Caco-2 (cell line): ENCODE measurements at regions of chr5 and their contacts with region 1.

Region 1: DNA sequence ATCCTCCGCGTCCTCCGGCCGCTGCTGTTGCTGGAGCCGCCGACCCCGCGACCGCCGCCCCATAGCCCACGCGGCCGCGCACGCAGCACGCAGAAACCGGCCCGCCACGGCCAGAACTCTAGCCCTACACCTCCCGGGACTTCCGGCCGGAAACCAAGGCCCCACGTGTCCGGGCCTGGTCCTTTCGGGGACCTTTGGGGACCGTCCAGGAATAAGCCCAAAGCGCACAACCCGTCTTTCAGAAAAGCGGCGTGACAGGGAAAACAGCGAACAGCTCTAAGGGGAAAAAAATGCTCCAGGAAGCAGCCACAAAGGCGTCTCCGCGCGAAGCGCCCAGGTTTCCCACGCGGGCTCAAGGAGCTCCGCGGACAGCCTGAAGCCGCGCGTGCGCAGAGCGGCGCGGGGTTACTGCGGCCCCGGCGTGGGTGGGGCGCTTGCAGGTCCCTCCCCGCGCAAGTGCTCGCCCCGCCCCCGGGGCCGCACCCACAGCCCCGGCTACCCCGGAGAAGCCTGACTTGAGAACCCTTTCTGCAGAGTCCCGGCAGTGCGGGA is at the starts of genes NSUN2 and SRD5A1:
- DNase-seq: peak; percentile 89 to 91
- H3K4me3 ChIP-seq: peak within 1 kb of the TSS; percentile 96
- H3K4me3 Mint-ChIP-seq: peak within 1 kb of the TSS; percentile 100
- H3K27ac Mint-ChIP-seq: peak within 1 kb of the TSS; percentile 99
- H3K4me1 ChIP-seq: peaks cover 7% of the 10 kb centered on the region; the same call in 1 of the 2 replicates
- H3K4me1 Mint-ChIP-seq: peaks cover 12% of the 10 kb centered on the region
- H3K27me3 ChIP-seq: no peaks in the 10 kb centered on the region
- H3K27me3 Mint-ChIP-seq: no peaks in the 10 kb centered on the region
- CTCF ChIP-seq: no peak
- total RNA-seq, gene NSUN2: 93.8 and 105 TPM in 2 replicates
- total RNA-seq, gene SRD5A1: 19.4 and 22.0 TPM in 2 replicates

Region 2: GRCh38 chr5:6377905-6378765 is 254.9 kb before region 1 on chr5 and contains the start of gene MED10:
- CTCF ChIA-PET with region 1: no interaction called
- POLR2A ChIA-PET with region 1: interaction called, 5 read pairs
- intact Hi-C with region 1: loop called (anchors 1 kb)
- DNase-seq: peak; percentile 93 to 95
- H3K4me3 ChIP-seq: peak within 1 kb of the TSS; percentile 89
- H3K4me3 Mint-ChIP-seq: peak within 1 kb of the TSS; percentile 100
- H3K27ac Mint-ChIP-seq: peak within 1 kb of the TSS; percentile 98
- H3K4me1 ChIP-seq: peaks cover 7% of the 10 kb centered on the region
- H3K4me1 Mint-ChIP-seq: peaks cover 6% of the 10 kb centered on the region
- H3K27me3 ChIP-seq: no peaks in the 10 kb centered on the region
- H3K27me3 Mint-ChIP-seq: no peaks in the 10 kb centered on the region
- CTCF ChIP-seq: no peak
- total RNA-seq, gene MED10: 48.6 and 50.6 TPM in 2 replicates

Region 3: DNA sequence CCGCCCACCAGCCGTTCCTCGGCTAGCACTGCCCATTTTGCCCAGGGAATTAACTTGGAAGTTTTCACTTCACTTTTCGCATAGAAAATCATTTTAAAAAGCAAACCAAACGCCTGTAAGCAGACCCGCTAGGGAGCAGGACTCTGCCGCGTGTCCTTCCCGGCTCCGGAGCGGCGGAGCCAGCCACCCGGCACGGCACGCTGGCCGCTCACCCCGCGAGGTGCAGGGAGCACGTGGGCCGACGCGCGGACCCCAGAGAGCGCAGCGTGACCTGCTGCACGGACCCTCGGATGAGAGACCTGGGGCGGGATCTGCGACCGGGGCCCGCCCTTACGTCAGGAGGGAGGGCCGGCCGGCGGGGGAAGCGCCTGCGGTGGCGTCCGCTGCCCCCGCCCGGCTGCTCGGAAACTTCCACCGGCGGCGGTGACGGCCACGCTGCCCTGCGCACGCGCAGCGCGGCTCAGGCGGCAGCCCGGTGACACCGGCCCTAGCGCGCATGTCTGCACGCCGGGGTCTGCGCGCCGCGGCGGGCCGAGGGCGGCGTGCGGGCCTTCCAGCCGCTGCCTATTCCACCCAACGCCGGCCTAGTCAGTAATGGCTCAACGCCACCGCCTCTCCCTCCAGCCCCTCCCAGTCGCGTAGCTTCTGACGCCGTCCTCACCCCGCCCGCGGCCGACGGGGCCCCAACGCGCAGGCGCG is 79.7 kb after region 1 on chr5:
- CTCF ChIA-PET with region 1: no interaction called
- POLR2A ChIA-PET with region 1: interaction called, 13 read pairs
- intact Hi-C with region 1: loop called (anchors 1 kb)
- DNase-seq: peak; percentile 96 to 98
- H3K4me3 ChIP-seq: peak overlapping the region; percentile 92
- H3K4me3 Mint-ChIP-seq: peak overlapping the region; percentile 80
- H3K27ac Mint-ChIP-seq: peak overlapping the region; percentile 86
- H3K4me1 ChIP-seq: peaks cover 16% of the 10 kb centered on the region
- H3K4me1 Mint-ChIP-seq: peaks cover 20% of the 10 kb centered on the region
- H3K27me3 ChIP-seq: no peaks in the 10 kb centered on the region
- H3K27me3 Mint-ChIP-seq: no peaks in the 10 kb centered on the region
- CTCF ChIP-seq: no peak

Region 4: DNA sequence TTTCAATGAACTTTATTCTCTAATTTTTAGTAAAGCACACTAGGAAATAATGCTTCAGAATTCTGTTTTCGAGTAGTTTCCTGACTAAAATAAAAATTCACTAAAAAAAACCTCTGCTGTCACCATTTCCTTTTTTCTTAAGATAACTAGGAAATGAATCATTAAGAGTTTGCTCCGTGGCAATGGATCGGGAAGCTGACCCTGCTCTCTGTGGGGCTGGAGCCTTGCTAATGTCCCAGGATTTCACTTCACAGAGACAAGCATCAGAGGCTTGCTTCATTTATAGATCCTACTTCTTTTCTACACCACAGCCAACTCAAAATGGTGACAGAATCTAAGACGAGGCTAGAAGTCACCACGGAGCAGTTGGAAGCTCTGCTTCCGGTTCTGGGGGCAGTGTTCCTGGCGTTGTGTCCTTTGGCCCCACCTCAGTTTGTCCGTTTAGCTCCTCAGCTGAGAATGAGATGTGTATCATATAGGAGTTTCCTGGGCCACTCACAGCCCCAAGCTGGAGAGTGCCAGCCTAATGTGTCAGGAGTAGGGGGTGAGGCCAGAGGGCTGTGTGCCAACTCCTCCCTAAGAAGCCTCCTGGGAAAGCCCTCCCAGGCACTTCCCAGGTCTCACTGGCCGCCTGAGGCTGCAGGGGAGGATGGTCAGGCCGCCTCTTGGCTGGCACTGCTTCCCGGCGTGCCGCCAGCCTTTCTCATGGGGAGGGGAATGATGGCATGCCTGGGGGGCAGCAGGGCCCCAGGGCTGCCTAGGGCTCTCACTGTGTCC is 99.8 kb after region 1 on chr5:
- CTCF ChIA-PET with region 1: no interaction called
- POLR2A ChIA-PET with region 1: no interaction called
- intact Hi-C with region 1: loop called (anchors 5 kb)
- DNase-seq: no peak
- H3K4me3 ChIP-seq: no peak overlapping the region
- H3K4me3 Mint-ChIP-seq: no peak overlapping the region
- H3K27ac Mint-ChIP-seq: peak overlapping the region; percentile 54
- H3K4me1 ChIP-seq: peaks cover 29% of the 10 kb centered on the region
- H3K4me1 Mint-ChIP-seq: peaks cover 23% of the 10 kb centered on the region
- H3K27me3 ChIP-seq: no peaks in the 10 kb centered on the region
- H3K27me3 Mint-ChIP-seq: no peaks in the 10 kb centered on the region
- CTCF ChIP-seq: no peak

Region 5: DNA sequence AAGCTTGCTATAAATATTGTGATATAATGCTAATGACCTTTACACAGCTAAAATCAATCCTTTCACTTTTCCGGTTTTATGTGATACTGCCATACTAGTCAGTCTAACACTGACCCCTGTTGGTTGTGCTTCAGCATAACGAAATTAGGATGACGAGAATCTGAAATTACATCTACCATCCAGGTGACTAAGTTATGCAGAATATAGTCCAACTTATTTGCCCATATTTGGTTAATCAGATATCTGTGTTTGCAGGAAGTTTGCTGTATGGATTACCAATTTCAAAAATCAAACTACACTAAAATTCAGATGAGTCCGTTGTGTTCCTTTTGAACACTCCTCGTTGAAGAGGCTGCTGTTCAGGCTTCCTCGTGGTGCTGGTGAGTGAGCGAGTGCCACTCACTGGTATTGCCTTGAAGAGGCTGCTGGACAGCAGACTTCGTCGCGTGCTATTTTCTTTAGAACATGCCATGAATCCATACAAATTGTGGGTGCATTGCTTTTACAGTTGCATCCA is 112.8 kb after region 1 on chr5:
- CTCF ChIA-PET with region 1: no interaction called
- POLR2A ChIA-PET with region 1: no interaction called
- intact Hi-C with region 1: loop called (anchors 1 kb)
- DNase-seq: peak in 1 of 2 experiments; percentile 35
- H3K4me3 ChIP-seq: no peak overlapping the region
- H3K4me3 Mint-ChIP-seq: no peak overlapping the region
- H3K27ac Mint-ChIP-seq: no peak overlapping the region
- H3K4me1 ChIP-seq: no peaks in the 10 kb centered on the region
- H3K4me1 Mint-ChIP-seq: no peaks in the 10 kb centered on the region
- H3K27me3 ChIP-seq: no peaks in the 10 kb centered on the region
- H3K27me3 Mint-ChIP-seq: no peaks in the 10 kb centered on the region
- CTCF ChIP-seq: peak; percentile 43 to 81